ENCODE measurements at regions of chr6 and their contacts with region 1.

Region 1: DNA sequence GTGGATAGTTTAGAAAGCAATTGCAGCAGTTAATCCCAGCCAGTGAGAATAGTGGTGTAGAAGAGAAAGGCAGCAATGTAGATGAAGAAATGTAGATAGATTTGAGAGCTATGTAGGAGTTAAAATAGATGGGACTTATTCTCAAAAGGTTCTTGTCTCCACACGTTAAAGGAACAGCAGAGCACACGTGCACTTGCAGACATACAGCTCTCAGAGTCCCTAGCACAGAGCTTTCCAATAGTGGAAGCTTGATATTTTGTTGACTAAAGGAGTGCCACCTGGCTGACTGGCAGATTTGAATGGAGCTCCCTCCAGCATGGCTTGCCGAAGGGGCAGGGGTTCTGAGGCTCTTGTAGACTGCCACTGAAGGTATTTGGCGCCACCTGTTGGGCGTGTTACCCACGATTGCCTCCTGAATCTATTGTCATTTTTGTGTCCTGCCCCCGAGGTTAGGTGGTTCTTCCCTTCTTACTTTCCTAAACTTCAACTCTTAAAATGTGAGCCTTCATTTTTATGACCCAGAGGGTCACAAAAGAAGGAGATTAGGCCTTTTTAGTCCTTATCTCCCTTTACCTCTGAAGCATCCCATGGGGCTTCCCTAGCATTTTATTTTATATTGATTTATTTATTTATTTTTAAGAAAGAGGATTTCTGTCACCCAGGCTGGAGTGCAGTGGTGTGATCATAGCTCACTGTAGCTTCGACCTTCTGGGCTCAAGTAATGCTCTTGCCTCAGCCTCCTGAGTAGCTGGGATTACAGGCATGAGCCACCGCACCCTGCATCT is 16.4 kb downstream of the BRD2 start:
- DNase-seq: no peak
- ATAC-seq: peak; percentile 83
- H3K4me3 ChIP-seq: no peak overlapping the region
- H3K27ac ChIP-seq: no peak overlapping the region
- H3K4me1 ChIP-seq: peaks cover 7% of the 10 kb centered on the region; the same call in 1 of the 2 replicates
- H3K27me3 ChIP-seq: no peaks in the 10 kb centered on the region
- CTCF ChIP-seq: peak; percentile 79 to 97 (median 89); a peak in 5 of 6 replicates
- EP300 ChIP-seq: no peak
- POLR2A ChIP-seq: no peak
- RAD21 ChIP-seq: peak; percentile 93

Region 2: GRCh38 chr6:32853541-32854375 is 131.0 kb before region 1 on chr6 and contains the starts of genes PSMB9 and TAP1:
- CTCF ChIA-PET with region 1: interaction called, 11 read pairs
- POLR2A ChIA-PET with region 1: interaction called, 3 read pairs
- RAD21 ChIA-PET with region 1: interaction called, 5 read pairs
- SMC1A ChIA-PET with region 1: interaction called, 7 read pairs
- in situ Hi-C with region 1: no loop called
- intact Hi-C with region 1: no loop called
- DNase-seq: peak; percentile 89
- ATAC-seq: peak; percentile 88
- H3K4me3 ChIP-seq: peak within 1 kb of the TSS; percentile 88
- H3K27ac ChIP-seq: peak within 1 kb of the TSS; percentile 100
- H3K4me1 ChIP-seq: peaks cover 32% of the 10 kb centered on the region
- H3K27me3 ChIP-seq: no peaks in the 10 kb centered on the region
- CTCF ChIP-seq: peak; percentile 79 to 84 (median 83)
- EP300 ChIP-seq: no peak
- POLR2A ChIP-seq: peak; percentile 83
- RAD21 ChIP-seq: peak; percentile 78
- polyA plus RNA-seq, gene PSMB9: 202 to 299 TPM
- polyA plus RNA-seq, gene TAP1: 33.4 to 60.0 TPM

Region 3: DNA sequence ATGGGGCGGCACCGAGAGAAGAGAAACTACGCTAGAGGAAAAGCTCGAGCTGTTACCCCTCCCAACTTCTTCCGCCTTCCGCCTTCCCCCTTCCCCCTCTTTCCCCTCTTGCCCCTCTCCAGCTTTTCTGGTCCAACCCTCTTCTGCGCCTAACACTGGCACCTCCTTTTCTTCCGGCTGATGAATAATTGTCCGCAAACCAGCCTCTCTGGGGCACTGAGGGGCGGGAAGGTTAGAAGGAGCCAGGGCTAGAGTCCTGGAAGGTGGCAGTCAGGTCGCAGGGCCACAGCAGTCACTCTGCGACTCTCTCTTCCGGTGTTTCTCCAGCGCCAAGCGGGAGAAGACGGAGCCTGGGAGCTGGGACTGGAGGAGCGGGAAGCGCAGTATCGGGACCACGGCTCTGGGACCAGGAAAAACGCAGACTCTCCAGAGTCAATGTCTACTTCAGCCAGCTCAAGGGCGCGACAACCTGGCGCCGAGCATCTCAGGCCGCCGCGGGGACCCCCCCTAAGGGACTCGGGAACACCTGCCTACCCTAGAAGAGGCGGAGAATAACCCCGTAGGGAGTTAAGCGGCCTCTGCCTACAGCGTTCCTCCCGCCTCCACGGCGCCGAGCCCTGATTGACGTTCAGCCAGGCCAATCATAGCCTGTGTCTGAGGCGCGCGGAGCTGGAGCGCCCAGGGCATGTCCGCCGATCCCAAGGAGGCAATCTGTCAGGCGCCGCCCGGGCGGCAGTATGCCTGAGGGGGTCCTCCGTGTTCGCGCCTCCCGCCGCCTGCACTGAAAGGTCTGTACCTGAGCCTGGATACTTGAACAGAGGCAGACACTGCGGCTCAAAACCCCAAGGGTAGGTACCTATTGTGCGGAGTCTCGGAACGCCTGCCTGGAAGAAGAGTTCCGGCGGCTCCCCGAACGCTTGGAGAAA is 90.5 kb before region 1 on chr6:
- CTCF ChIA-PET with region 1: interaction called, 61 read pairs
- POLR2A ChIA-PET with region 1: interaction called, 11 read pairs
- RAD21 ChIA-PET with region 1: interaction called, 104 read pairs
- SMC1A ChIA-PET with region 1: interaction called, 51 read pairs
- in situ Hi-C with region 1: loop called (anchors 5 kb)
- intact Hi-C with region 1: no loop called
- DNase-seq: peak; percentile 91
- ATAC-seq: peak; percentile 98
- H3K4me3 ChIP-seq: peak overlapping the region; percentile 81
- H3K27ac ChIP-seq: peak overlapping the region; percentile 90
- H3K4me1 ChIP-seq: peaks cover 12% of the 10 kb centered on the region
- H3K27me3 ChIP-seq: no peaks in the 10 kb centered on the region
- CTCF ChIP-seq: no peak; a peak in 1 of 6 replicates
- EP300 ChIP-seq: no peak
- POLR2A ChIP-seq: peak; percentile 83
- RAD21 ChIP-seq: no peak

Region 4: DNA sequence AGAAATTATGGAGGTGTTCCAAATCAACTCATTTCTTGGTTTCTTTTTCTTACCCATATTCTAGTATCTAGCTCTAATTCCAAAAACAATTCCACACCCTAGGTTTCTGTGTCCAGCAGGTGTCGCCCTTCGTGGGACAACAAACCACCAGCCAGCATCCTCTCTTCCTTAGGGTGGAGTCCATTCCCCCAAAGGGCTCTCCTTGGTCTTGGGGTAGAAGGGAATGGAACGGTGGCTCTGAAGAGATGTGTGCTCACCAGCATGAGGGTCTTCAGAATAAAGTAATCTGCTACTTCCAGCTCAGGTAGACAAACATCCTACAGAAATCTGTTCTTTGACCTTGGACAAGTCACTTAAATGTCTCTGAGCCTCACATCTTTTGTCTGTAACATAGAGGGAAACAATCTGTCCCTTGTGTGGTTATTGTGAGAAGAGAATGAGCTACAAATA is 51.1 kb before region 1 on chr6:
- CTCF ChIA-PET with region 1: interaction called, 367 read pairs
- POLR2A ChIA-PET with region 1: interaction called, 16 read pairs
- RAD21 ChIA-PET with region 1: interaction called, 135 read pairs
- SMC1A ChIA-PET with region 1: interaction called, 131 read pairs
- in situ Hi-C with region 1: no loop called
- intact Hi-C with region 1: loop called (anchors 2 kb)
- DNase-seq: peak; percentile 38
- ATAC-seq: peak; percentile 70
- H3K4me3 ChIP-seq: no peak overlapping the region
- H3K27ac ChIP-seq: no peak overlapping the region
- H3K4me1 ChIP-seq: peaks cover 11% of the 10 kb centered on the region
- H3K27me3 ChIP-seq: no peaks in the 10 kb centered on the region; a peak in 1 of 4 replicates
- CTCF ChIP-seq: peak; percentile 75 to 85 (median 82)
- EP300 ChIP-seq: no peak
- POLR2A ChIP-seq: peak; percentile 46; the same call in 1 of the 2 replicates
- RAD21 ChIP-seq: peak; percentile 76

Region 5: DNA sequence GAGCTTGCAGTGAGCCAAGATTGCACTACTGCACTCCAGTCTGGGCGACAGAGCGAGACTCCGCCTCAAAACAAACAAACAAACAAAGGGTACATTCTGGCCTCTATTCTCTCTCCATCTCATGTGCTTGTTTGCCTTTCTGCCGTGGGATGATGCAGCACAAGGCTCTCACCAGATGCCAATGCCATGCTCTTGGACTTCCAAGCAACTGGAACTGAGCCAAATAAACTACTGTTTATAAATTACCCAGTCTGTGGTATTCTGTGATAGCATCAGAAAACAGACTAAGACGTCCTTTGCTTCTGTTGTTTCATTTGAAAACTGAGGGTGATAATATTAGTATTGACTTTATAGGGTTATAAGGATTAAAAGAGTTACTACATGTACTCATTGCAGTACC is 20.0 kb before region 1 on chr6:
- CTCF ChIA-PET with region 1: interaction called, 239 read pairs
- POLR2A ChIA-PET with region 1: interaction called, 486 read pairs
- RAD21 ChIA-PET with region 1: interaction called, 72 read pairs
- SMC1A ChIA-PET with region 1: interaction called, 195 read pairs
- in situ Hi-C with region 1: no loop called
- intact Hi-C with region 1: no loop called
- DNase-seq: no peak
- ATAC-seq: no peak
- H3K4me3 ChIP-seq: no peak overlapping the region
- H3K27ac ChIP-seq: no peak overlapping the region
- H3K4me1 ChIP-seq: peaks cover 8% of the 10 kb centered on the region
- H3K27me3 ChIP-seq: no peaks in the 10 kb centered on the region
- CTCF ChIP-seq: no peak
- EP300 ChIP-seq: no peak
- POLR2A ChIP-seq: no peak
- RAD21 ChIP-seq: no peak

Region 6: GRCh38 chr6:33248925-33249731 is 264.3 kb after region 1 on chr6:
- CTCF ChIA-PET with region 1: interaction called, 10 read pairs
- POLR2A ChIA-PET with region 1: no interaction called
- RAD21 ChIA-PET with region 1: no interaction called
- SMC1A ChIA-PET with region 1: no interaction called
- in situ Hi-C with region 1: no loop called
- intact Hi-C with region 1: no loop called
- DNase-seq: peak; percentile 99
- ATAC-seq: peak; percentile 95
- H3K4me3 ChIP-seq: peak overlapping the region; percentile 78
- H3K27ac ChIP-seq: peak overlapping the region; percentile 94
- H3K4me1 ChIP-seq: peaks cover 10% of the 10 kb centered on the region
- H3K27me3 ChIP-seq: no peaks in the 10 kb centered on the region
- CTCF ChIP-seq: peak in 2 of 3 experiments; percentile 7 to 28; a peak in 2 of 6 replicates
- EP300 ChIP-seq: 0 out of 4 replicates have a peak, but pooled peaks of 1 of the 2 experiments have one; percentile 23
- POLR2A ChIP-seq: peak; percentile 94
- RAD21 ChIP-seq: no peak